Sigmoid colon (tissue), 7 donors: ENCODE measurements at regions of chr7 and their contacts with region 1.

Region 1: DNA sequence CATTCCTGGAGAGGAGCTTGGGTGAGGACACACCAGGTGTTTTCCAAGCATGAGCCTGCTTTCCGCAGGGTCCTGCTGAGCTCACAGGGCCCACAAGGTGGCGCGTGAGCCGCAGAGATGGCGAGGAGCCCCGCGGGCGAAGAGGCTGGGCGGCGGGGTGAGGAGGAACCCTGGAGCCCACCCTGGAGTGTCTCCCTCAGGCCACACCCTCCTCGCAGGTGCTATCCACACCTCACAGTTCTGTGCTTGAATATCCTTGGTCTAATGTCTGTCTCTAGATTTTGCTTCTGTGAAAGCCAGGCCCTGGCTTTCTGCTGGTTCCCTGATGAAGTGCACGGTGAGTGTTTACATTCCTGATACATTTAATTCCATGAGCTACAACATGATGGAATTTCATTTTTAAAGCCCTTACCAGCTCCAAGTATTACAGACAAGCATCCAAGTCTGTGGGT is 433.6 kb downstream of the ACTR3B start:
- DNase-seq: peak; percentile 67
- H3K4me3 ChIP-seq: peak overlapping the region in 3 of 4 donors; percentile 12 to 37 (median 19)
- H3K27ac ChIP-seq: peak overlapping the region in 2 of 4 donors; percentile 42 to 47
- H3K4me1 ChIP-seq: peaks cover 0 to 9% (median 0%) of the 10 kb centered on the region in 4 donors
- H3K27me3 ChIP-seq: no peaks in the 10 kb centered on the region
- CTCF ChIP-seq: peak; percentile 62 to 82 (median 72)
- EP300 ChIP-seq: no peak
- POLR2A ChIP-seq: no peak

Region 2: DNA sequence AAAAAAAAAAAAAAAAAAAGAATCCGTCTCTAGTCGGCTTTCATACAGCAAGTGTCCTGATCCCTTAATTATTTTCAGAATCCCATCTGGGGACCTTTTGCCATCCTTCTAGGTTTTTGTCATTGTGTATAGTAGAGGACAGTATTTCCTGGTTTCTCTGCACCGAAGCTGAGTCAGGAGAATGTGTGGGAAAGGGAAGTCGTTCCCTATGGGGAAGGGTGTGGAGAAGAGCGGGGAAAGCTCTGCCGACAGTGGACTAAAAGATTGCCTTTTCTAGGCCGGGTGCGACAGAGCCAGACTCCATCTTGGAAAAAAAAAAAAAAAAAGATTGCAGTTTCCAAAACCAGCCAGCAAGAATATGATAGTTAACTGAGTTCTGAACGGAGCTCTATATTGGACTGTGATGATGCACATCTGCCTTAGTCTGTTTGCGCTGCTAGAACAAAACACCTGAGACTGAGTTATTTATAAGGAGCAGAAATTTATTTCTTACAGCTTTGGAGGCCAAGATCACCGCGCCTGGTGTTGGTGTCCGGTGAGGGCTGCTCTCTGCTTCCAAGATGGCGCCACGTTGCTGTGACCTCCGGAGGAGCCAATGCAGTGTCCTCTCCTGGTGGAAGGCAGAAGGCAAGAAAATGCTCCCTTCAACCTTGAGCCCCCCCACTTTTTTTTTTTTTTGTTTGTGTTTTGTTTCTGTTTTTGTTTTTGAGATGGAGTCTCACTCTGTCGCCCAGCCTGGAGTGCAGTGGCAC is 449.8 kb before region 1 on chr7:
- intact Hi-C with region 1: no loop called
- DNase-seq: no peak
- H3K4me3 ChIP-seq: no peak overlapping the region
- H3K27ac ChIP-seq: no peak overlapping the region
- H3K4me1 ChIP-seq: no peaks in the 10 kb centered on the region
- H3K27me3 ChIP-seq: no peaks in the 10 kb centered on the region
- CTCF ChIP-seq: no peak
- EP300 ChIP-seq: no peak
- POLR2A ChIP-seq: no peak

Region 3: DNA sequence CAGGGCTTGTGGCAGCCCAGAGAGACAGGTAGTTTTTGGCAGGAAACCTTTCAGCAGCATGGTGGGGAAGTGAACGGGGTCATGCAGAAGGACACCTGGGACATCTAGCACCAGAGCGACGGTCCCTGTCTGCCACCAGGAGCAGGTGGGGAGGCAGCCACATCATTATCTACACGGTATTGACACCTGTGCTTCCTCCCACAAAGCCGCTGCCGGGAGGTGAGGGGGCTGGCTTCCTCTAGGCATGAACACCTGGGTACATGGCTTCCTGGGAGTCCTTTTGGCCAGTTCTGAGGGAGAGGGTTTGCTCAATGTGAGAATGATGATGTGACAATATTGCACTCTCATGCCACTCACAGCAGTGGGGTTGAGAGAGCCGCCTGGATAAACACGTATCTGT is 158.4 kb before region 1 on chr7:
- intact Hi-C with region 1: no loop called
- DNase-seq: no peak
- H3K4me3 ChIP-seq: no peak overlapping the region
- H3K27ac ChIP-seq: no peak overlapping the region
- H3K4me1 ChIP-seq: no peaks in the 10 kb centered on the region
- H3K27me3 ChIP-seq: no peaks in the 10 kb centered on the region
- CTCF ChIP-seq: no peak
- EP300 ChIP-seq: no peak
- POLR2A ChIP-seq: no peak

Region 4: DNA sequence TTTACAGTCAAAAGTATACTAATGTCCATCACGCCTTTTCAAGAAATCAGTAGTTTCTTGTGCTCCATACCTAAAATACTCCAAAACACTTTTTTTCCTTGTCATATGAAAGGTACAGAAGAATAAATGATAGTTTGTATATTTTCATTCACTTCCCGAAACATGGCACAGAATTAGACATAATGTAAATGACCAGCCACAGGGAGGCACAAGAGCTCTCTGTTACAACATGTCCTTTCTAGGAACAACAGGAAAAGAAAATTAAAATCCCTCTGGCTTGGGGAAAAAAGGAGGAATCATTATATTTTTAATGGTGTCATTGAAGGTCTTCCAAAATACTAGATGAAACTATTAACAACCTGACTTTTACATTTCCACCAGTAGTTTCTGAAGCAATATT is 102.4 kb before region 1 on chr7:
- intact Hi-C with region 1: no loop called
- DNase-seq: no peak
- H3K4me3 ChIP-seq: no peak overlapping the region
- H3K27ac ChIP-seq: no peak overlapping the region
- H3K4me1 ChIP-seq: no peaks in the 10 kb centered on the region
- H3K27me3 ChIP-seq: no peaks in the 10 kb centered on the region
- CTCF ChIP-seq: no peak
- EP300 ChIP-seq: no peak
- POLR2A ChIP-seq: no peak

Region 5: DNA sequence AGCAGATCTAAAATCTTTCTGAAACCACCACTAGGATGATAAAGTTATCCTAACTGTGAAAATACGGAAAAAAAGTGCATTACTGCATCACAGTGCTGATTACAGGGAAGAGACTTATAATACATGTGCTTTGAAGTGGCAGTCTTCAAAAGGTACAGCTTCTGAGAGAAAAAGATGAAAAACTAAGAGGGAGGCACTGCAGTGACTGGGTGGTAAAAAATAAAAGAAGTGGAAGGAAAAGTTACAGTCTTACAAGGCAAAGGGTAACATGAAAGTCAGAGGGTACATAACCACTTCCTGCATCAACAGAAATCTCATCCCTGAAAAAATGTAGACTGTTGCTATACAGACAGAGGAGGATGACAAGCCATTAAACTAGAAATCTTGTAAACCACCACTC is 31.7 kb after region 1 on chr7:
- intact Hi-C with region 1: no loop called
- DNase-seq: no peak
- H3K4me3 ChIP-seq: no peak overlapping the region
- H3K27ac ChIP-seq: no peak overlapping the region
- H3K4me1 ChIP-seq: no peaks in the 10 kb centered on the region
- H3K27me3 ChIP-seq: no peaks in the 10 kb centered on the region
- CTCF ChIP-seq: no peak
- EP300 ChIP-seq: no peak
- POLR2A ChIP-seq: no peak

Region 6: DNA sequence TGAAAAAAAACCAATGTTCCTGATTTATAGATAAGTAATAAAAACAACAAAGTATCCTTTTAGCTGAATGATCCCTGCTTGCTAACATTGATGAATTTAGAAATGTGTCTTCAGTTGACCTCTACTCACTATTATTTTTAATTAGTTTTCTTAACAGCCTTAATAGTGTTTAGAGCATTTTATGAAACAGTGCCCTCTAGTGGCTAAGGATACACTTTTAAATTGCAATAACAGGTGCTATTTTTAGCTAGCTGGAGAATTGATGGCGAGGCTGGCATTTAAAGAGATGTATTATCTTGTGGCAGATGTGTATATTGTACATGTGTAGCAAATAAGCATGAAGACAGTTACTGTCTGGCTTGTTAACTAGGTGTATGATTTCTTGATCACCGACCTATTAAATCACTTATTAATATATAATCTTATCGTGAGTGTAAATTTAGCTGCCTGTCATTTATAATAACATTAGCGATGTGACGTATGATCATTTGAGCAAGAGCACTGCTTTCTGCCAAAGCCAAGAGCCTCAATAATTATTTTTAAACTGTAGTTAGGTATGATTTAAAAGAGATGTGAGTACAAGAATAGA is 1310.9 kb after region 1 on chr7:
- intact Hi-C with region 1: loop called (anchors 10 kb)
- DNase-seq: no peak
- H3K4me3 ChIP-seq: no peak overlapping the region
- H3K27ac ChIP-seq: no peak overlapping the region
- H3K4me1 ChIP-seq: peaks cover 0 to 20% (median 15%) of the 10 kb centered on the region in 4 donors
- H3K27me3 ChIP-seq: no peaks in the 10 kb centered on the region
- CTCF ChIP-seq: peak in 3 of 4 experiments; percentile 33 to 64 (median 55)
- EP300 ChIP-seq: no peak
- POLR2A ChIP-seq: no peak

Region 7: DNA sequence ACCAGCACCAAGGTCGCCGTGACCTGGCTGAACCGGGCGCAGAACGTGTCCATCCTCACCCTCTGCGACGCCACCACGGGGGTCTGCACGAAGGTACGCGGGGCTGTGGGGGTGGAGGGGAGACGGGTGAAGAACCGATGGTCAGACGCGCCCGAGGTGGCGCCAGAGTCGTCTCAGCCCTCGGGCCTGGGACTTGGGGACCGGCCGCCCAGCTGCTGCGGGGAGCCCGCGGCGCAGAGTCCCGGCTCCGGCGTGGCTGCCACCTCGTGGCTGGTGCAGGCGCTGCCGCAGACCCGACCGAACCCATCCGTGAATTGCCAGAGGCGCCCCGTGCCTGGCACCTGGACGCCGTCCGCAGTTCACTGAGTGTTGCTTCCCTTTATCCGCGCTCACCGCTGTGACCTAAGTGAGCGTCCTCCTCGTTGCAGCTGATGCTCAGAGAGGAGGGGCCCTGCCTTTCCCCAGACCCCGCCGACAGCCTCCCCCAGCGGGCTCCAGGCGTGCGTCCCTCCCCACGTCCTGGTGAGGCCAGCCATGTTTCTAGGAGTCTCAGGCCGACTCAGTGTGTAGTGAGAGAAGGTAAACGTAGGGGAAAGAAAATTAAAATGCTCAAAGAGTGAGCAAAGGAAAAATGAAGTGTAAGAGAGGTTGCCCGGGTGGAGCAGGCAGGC is 1601.1 kb after region 1 on chr7:
- intact Hi-C with region 1: loop called (anchors 10 kb)
- DNase-seq: no peak
- H3K4me3 ChIP-seq: peak overlapping the region in 1 of 4 donors; percentile 20
- H3K27ac ChIP-seq: no peak overlapping the region
- H3K4me1 ChIP-seq: peaks cover 0 to 6% (median 0%) of the 10 kb centered on the region in 4 donors
- H3K27me3 ChIP-seq: peaks cover 0 to 6% (median 0%) of the 10 kb centered on the region in 3 donors
- CTCF ChIP-seq: peak in 3 of 4 experiments; percentile 27 to 59 (median 39)
- EP300 ChIP-seq: no peak
- POLR2A ChIP-seq: no peak